Activated CD4-positive, alpha-beta T cell treated with anti-CD3 and anti-CD28 coated beads, Interleukin-2, amount 10 ng/mL, durations not matched to agents 7 days and 5 days (primary cell): ENCODE measurements at regions of chr10 and their contacts with region 1.

Region 1: GRCh38 chr10:103451831-103452505 is at the start of gene CALHM2:
- DNase-seq: peak; percentile 65
- H3K4me3 Mint-ChIP-seq: peak within 1 kb of the TSS; percentile 83
- H3K27ac Mint-ChIP-seq: peak within 1 kb of the TSS; percentile 92
- H3K4me1 Mint-ChIP-seq: peaks cover 65% of the 10 kb centered on the region
- H3K27me3 Mint-ChIP-seq: no peaks in the 10 kb centered on the region
- total RNA-seq, gene CALHM2: 89.6 to 109 TPM

Region 2: DNA sequence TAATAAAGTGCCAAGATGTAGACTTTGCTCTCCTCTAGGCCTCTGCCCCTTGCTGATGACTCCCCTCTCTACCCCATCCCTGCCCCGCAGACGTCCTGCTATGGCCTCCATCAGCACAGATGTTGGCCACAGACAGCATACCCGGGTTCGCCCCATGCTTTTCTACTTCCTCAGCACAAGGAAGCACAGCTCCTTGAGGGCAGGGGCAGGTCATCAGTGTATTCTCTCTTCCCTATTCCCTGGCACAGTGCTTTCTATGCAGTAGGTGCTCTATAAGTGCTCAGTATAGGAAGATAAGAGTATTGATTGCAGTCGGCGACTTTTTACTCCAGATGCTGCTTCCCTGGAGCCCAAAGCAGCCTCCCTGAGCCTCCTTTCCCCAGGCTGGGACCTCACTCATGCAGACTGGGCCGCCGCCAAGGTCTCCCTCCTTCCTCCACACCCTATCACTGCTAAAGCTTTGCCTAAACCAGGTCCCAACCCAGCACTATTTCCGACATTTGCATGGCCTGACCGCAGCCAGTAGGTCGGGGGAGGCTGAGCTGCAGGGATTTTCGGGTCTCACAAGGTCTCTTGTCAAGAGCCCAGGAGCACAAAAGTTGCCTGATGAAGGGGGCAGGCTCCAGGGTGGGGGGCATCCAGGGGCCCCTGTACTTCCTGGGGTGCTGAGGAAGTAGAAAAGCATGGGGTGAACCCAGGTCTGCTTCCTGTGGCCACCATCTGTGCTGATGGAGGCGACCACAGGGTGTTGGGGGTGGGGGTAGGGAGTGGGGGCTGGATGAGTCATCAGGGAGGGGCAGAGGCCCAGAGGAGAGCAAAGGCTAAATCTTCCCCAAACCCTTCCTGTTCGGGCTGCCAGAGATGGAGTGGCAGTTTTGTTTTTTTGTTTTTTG is 19.0 kb after region 1 on chr10:
- CTCF ChIA-PET with region 1: interaction called, 16 read pairs
- POLR2A ChIA-PET with region 1: interaction called, 3 read pairs
- DNase-seq: peak; percentile 88
- H3K4me3 Mint-ChIP-seq: peak overlapping the region; percentile 60
- H3K27ac Mint-ChIP-seq: peak overlapping the region; percentile 97
- H3K4me1 Mint-ChIP-seq: peaks cover 74% of the 10 kb centered on the region
- H3K27me3 Mint-ChIP-seq: peaks cover 3% of the 10 kb centered on the region

Region 3: GRCh38 chr10:103476046-103476995 is 24.4 kb after region 1 on chr10:
- CTCF ChIA-PET with region 1: interaction called, 16 read pairs
- POLR2A ChIA-PET with region 1: interaction called, 3 read pairs
- DNase-seq: no peak
- H3K4me3 Mint-ChIP-seq: no peak overlapping the region
- H3K27ac Mint-ChIP-seq: peak overlapping the region; percentile 69
- H3K4me1 Mint-ChIP-seq: peaks cover 55% of the 10 kb centered on the region
- H3K27me3 Mint-ChIP-seq: no peaks in the 10 kb centered on the region

Region 4: GRCh38 chr10:103486336-103487160 is 34.6 kb after region 1 on chr10:
- CTCF ChIA-PET with region 1: interaction called, 13 read pairs
- POLR2A ChIA-PET with region 1: no interaction called
- DNase-seq: no peak
- H3K4me3 Mint-ChIP-seq: no peak overlapping the region
- H3K27ac Mint-ChIP-seq: no peak overlapping the region
- H3K4me1 Mint-ChIP-seq: peaks cover 24% of the 10 kb centered on the region
- H3K27me3 Mint-ChIP-seq: peaks cover 11% of the 10 kb centered on the region